Activated CD8-positive, alpha-beta T cell treated with anti-CD3 and anti-CD28 coated beads for 36 hours (primary cell): ENCODE measurements at regions of chr11 and their contacts with region 1.

Region 1: GRCh38 chr11:36492724-36493304 is 17.3 kb downstream of the TRAF6 start:
- DNase-seq: peak; percentile 45
- ATAC-seq: peak; percentile 74
- H3K4me3 Mint-ChIP-seq: no peak overlapping the region
- H3K27ac Mint-ChIP-seq: no peak overlapping the region
- H3K4me1 Mint-ChIP-seq: peaks cover 13% of the 10 kb centered on the region
- H3K27me3 Mint-ChIP-seq: no peaks in the 10 kb centered on the region
- CTCF ChIP-seq: peak; percentile 86

Region 2: DNA sequence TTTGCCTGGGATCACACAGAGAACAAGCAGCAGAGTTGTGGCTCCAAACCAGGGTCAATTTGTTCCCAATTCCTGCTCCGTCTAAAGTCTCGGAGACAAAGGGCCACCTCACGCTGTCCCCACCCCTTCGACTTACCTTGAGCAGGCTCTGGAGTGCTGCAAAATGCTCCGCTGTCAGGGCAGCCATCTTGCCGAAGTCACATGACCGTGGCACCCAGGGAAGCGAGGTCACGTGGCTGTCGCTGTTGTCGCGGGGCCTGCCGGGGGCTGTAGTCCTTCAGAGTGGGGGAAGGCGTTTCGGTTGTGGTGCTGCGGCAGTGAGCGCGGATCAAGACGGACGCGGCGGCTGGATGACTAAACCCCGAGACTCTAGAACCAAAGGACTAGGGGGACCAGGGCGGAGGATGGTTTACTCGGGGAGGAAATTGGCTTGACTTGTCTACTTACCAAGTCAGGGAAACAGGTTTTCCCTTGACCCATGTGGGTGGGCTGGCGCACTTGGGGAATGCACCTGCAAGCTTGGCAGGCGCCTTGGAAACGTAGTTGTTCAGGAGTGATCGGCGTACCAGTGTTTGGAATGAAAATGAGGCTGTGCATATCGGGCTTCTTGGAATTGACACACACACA is 203.5 kb before region 1 on chr11 and contains the start of gene COMMD9:
- CTCF ChIA-PET with region 1: interaction called, 163 read pairs
- POLR2A ChIA-PET with region 1: interaction called, 4 read pairs
- intact Hi-C with region 1: loop called (anchors 2 kb)
- DNase-seq: peak; percentile 98
- ATAC-seq: peak; percentile 99
- H3K4me3 Mint-ChIP-seq: peak within 1 kb of the TSS; percentile 82
- H3K27ac Mint-ChIP-seq: peak within 1 kb of the TSS; percentile 86
- H3K4me1 Mint-ChIP-seq: peaks cover 29% of the 10 kb centered on the region
- H3K27me3 Mint-ChIP-seq: no peaks in the 10 kb centered on the region
- CTCF ChIP-seq: no peak
- total RNA-seq, gene COMMD9: 34.8 to 36.8 TPM

Region 3: GRCh38 chr11:36312611-36313472 is 180.0 kb before region 1 on chr11:
- CTCF ChIA-PET with region 1: interaction called, 10 read pairs
- POLR2A ChIA-PET with region 1: no interaction called
- intact Hi-C with region 1: no loop called
- DNase-seq: no peak
- ATAC-seq: peak; percentile 53
- H3K4me3 Mint-ChIP-seq: no peak overlapping the region
- H3K27ac Mint-ChIP-seq: no peak overlapping the region
- H3K4me1 Mint-ChIP-seq: peaks cover 10% of the 10 kb centered on the region
- H3K27me3 Mint-ChIP-seq: peaks cover 28% of the 10 kb centered on the region
- CTCF ChIP-seq: no peak

Region 4: GRCh38 chr11:36347384-36347906 is 145.4 kb before region 1 on chr11:
- CTCF ChIA-PET with region 1: interaction called, 13 read pairs
- POLR2A ChIA-PET with region 1: no interaction called
- intact Hi-C with region 1: no loop called
- DNase-seq: no peak
- ATAC-seq: no peak
- H3K4me3 Mint-ChIP-seq: no peak overlapping the region
- H3K27ac Mint-ChIP-seq: peak overlapping the region; percentile 6
- H3K4me1 Mint-ChIP-seq: peaks cover 33% of the 10 kb centered on the region
- H3K27me3 Mint-ChIP-seq: peaks cover 30% of the 10 kb centered on the region
- CTCF ChIP-seq: no peak

Region 5: DNA sequence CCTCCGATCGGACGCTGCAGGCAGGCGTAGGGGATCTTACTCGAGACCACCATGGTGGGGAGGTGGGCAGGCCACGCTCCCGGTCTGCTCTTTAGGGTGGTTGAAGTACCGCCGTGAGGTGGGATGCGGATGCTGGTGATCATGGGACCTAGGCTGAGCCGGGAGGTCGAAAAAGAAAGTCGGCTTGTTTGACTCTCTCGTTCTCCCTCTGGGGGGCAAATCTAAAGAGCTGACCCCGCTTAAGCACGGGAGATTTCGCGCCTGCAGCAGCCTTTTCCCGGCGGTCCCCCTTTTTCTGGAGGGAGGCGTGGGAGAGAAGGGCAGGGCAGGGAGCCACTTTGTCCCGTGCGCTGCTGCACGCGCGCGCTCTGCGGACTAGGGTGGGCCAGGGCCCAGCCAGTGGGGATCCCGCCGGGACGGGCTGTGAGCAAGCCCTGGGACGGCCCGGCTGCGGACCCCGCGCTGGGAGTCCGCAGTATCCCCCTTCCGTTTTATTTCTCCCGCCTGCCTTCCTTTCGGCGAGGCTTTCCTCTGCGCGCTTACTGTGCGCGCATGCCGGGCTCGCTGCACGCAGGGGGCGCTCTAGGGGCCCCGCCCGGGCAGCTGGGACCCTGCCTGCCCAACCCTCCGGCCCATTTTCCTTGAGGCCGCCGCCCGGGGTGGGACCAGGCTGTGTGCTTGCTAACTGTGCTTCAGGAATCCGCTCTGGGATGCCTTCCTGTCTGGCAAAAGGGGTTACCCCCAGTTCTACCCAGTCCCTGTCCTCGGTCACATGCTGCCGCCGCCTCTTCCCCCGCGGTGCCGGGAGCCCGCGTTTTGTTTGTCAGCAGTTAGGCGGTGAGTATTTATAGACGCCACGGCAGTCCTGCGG is 115.7 kb before region 1 on chr11:
- CTCF ChIA-PET with region 1: interaction called, 15 read pairs
- POLR2A ChIA-PET with region 1: interaction called, 3 read pairs
- intact Hi-C with region 1: no loop called
- DNase-seq: peak; percentile 70
- ATAC-seq: peak; percentile 65
- H3K4me3 Mint-ChIP-seq: peak overlapping the region; percentile 88
- H3K27ac Mint-ChIP-seq: peak overlapping the region; percentile 79
- H3K4me1 Mint-ChIP-seq: peaks cover 26% of the 10 kb centered on the region
- H3K27me3 Mint-ChIP-seq: peaks cover 58% of the 10 kb centered on the region
- CTCF ChIP-seq: peak; percentile 67

Region 6: GRCh38 chr11:36469063-36469462 is 23.8 kb before region 1 on chr11:
- CTCF ChIA-PET with region 1: interaction called, 17 read pairs
- POLR2A ChIA-PET with region 1: no interaction called
- intact Hi-C with region 1: no loop called
- DNase-seq: peak; percentile 42
- ATAC-seq: no peak
- H3K4me3 Mint-ChIP-seq: no peak overlapping the region
- H3K27ac Mint-ChIP-seq: no peak overlapping the region
- H3K4me1 Mint-ChIP-seq: no peaks in the 10 kb centered on the region
- H3K27me3 Mint-ChIP-seq: no peaks in the 10 kb centered on the region
- CTCF ChIP-seq: no peak

Region 7: DNA sequence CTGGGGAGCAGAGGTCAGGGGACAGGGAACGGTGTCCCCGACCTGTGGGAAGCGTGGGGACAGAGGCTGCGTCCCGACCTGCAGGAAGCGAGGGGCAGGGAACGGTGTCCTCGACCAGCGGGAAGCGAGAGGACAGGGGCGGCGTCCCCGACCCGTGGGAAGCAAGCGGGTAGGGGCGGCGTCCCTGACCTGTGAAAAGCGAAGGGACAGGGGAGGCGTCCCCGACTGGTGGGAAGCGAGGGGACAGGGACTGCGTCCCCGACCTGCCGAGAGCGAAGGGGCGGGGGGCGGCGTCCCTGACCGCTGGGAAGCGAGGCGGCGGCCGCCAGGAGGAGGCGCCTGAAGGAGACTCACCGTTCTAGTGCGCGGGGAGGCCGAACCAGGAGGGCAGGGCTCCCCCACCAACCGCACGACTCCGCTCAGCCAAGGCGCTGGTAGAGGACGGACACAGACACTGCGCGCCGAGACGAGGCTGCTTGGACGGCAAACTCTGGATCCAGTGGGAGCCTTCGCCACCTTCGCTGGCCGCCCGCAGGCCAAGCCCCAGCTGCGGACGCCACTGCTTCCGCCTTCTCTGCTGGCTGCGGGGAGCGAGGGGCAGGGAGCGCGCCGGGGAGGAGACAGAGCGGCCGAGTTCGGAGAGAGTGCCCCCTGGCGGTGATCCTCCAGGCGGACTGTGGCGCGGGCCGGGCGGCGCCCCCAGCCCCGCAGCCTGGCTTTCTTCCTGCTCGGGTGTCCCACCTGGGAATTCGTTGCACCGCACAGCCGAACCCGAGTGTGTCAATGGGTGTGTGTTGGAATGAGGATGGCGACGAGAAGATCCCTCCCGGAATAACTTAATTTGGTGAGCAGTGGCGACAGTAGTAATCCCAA is 17.1 kb after region 1 on chr11 and contains the start of gene TRAF6:
- CTCF ChIA-PET with region 1: interaction called, 80 read pairs
- POLR2A ChIA-PET with region 1: interaction called, 3 read pairs
- intact Hi-C with region 1: no loop called
- DNase-seq: peak; percentile 90
- ATAC-seq: peak; percentile 95
- H3K4me3 Mint-ChIP-seq: peak within 1 kb of the TSS; percentile 95
- H3K27ac Mint-ChIP-seq: peak within 1 kb of the TSS; percentile 85
- H3K4me1 Mint-ChIP-seq: peaks cover 28% of the 10 kb centered on the region
- H3K27me3 Mint-ChIP-seq: peaks cover 2% of the 10 kb centered on the region
- CTCF ChIP-seq: peak; percentile 92
- total RNA-seq, gene TRAF6: 8.8 to 10.3 TPM